T-cell (primary cell): ENCODE measurements at regions of chr21 and their contacts with region 1.

Region 1: DNA sequence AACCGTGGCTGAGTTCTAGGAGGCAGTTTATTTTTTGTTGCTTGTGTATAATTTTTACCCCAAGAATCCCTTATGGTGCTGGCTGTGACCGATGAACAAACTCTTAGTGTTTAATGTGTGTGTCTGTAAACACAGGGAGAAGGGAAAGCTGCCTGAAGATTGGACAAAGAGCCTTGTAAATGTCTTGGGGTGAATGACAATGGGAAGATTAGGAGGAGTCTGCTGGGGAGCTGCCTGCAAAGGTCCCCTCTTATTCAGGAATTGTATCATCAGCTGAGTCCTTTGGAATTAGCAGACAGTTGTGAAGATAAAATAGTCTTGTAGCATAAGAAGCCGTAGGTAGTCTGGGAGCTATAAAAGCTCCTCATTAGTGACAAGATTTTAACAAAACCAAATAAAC is 88.4 kb downstream of the RUNX1 start:
- DNase-seq: no peak
- ATAC-seq: no peak
- H3K4me3 ChIP-seq: no peak overlapping the region
- H3K4me3 Mint-ChIP-seq: no peak overlapping the region
- H3K27ac ChIP-seq: no peak overlapping the region
- H3K27ac Mint-ChIP-seq: no peak overlapping the region
- H3K4me1 ChIP-seq: peaks cover 30 to 56% of the 10 kb centered on the region in 2 experiments
- H3K4me1 Mint-ChIP-seq: peaks cover 80 to 88% (median 87%) of the 10 kb centered on the region in 3 donors
- H3K27me3 ChIP-seq: no peaks in the 10 kb centered on the region
- H3K27me3 Mint-ChIP-seq: no peaks in the 10 kb centered on the region

Region 2: GRCh38 chr21:34946916-34947534 is 13.6 kb before region 1 on chr21:
- CTCF ChIA-PET with region 1: no interaction called
- POLR2A ChIA-PET with region 1: no interaction called
- DNase-seq: no peak
- ATAC-seq: peak in 2 of 4 experiments; percentile 8 to 24
- H3K4me3 ChIP-seq: no peak overlapping the region
- H3K4me3 Mint-ChIP-seq: no peak overlapping the region
- H3K27ac ChIP-seq: no peak overlapping the region
- H3K27ac Mint-ChIP-seq: peak overlapping the region; percentile 81 to 82
- H3K4me1 ChIP-seq: peaks cover 40 to 44% of the 10 kb centered on the region in 2 experiments
- H3K4me1 Mint-ChIP-seq: peaks cover 84 to 92% (median 87%) of the 10 kb centered on the region in 3 donors
- H3K27me3 ChIP-seq: no peaks in the 10 kb centered on the region
- H3K27me3 Mint-ChIP-seq: no peaks in the 10 kb centered on the region

Region 3: DNA sequence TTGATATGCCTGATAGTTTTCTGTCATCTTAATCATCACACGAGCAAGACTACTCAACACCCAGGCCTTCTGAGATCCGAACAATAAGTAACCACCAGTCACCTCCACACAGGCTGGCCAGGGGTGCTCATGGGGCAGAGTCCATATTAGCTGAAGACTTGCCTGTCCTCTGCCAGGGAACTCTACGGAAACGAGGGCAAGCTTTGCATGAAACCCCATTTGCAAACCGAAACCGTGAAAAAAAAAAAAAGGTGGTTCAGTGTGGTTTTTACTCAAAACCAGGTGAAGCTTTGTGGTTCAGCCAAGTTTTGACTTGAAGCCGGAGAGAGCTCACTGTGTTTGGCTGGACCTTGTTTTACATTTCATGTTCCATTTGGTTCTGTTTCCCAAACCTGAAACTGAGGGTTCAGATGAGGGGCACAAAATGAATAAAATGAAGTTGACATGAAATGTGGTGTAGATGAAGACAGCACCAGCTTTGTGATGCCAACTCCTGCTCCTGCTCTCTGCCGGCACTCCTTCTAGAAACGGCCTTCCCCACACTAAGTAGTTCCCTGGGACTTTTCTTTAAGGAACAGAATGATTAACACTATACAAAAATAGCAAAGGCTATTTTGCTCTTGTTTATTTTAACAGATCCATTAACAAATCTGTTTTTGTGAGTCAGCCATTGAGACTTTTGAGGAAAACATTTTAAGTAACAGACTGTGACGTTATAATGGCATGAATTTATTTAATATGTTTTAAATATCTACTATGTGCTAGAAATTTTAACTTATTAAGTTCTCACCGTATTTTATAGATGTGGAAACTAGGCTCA is 13.7 kb after region 1 on chr21:
- CTCF ChIA-PET with region 1: no interaction called
- POLR2A ChIA-PET with region 1: interaction called, 5 to 10 read pairs
- DNase-seq: peak in 33 of 35 experiments; percentile 10 to 82 (median 32)
- ATAC-seq: peak; percentile 85 to 90 (median 88)
- H3K4me3 ChIP-seq: peak overlapping the region; percentile 24 to 61
- H3K4me3 Mint-ChIP-seq: peak overlapping the region; percentile 74 to 81 (median 78)
- H3K27ac ChIP-seq: peak overlapping the region; percentile 58
- H3K27ac Mint-ChIP-seq: peak overlapping the region; percentile 89 to 90
- H3K4me1 ChIP-seq: peaks cover 44 to 61% of the 10 kb centered on the region in 2 experiments
- H3K4me1 Mint-ChIP-seq: peaks cover 82 to 88% (median 86%) of the 10 kb centered on the region in 3 donors
- H3K27me3 ChIP-seq: no peaks in the 10 kb centered on the region
- H3K27me3 Mint-ChIP-seq: no peaks in the 10 kb centered on the region

Region 4: GRCh38 chr21:34984356-34985058 is 23.8 kb after region 1 on chr21:
- CTCF ChIA-PET with region 1: no interaction called
- POLR2A ChIA-PET with region 1: no interaction called
- DNase-seq: no peak
- ATAC-seq: no peak
- H3K4me3 ChIP-seq: no peak overlapping the region
- H3K4me3 Mint-ChIP-seq: peak overlapping the region; percentile 3 to 66 (median 56)
- H3K27ac ChIP-seq: peak overlapping the region; percentile 57
- H3K27ac Mint-ChIP-seq: peak overlapping the region; percentile 71 to 79
- H3K4me1 ChIP-seq: peaks cover 61 to 78% of the 10 kb centered on the region in 2 experiments
- H3K4me1 Mint-ChIP-seq: peaks cover 81 to 96% (median 94%) of the 10 kb centered on the region in 3 donors
- H3K27me3 ChIP-seq: no peaks in the 10 kb centered on the region
- H3K27me3 Mint-ChIP-seq: no peaks in the 10 kb centered on the region

Region 5: GRCh38 chr21:35035581-35035980 is 74.9 kb after region 1 on chr21:
- CTCF ChIA-PET with region 1: no interaction called
- POLR2A ChIA-PET with region 1: no interaction called
- DNase-seq: no peak
- ATAC-seq: no peak
- H3K4me3 ChIP-seq: no peak overlapping the region
- H3K4me3 Mint-ChIP-seq: peak overlapping the region in 2 of 3 donors; percentile 4 to 85
- H3K27ac ChIP-seq: peak overlapping the region; percentile 66
- H3K27ac Mint-ChIP-seq: peak overlapping the region; percentile 85 to 86
- H3K4me1 ChIP-seq: peaks cover 68 to 81% of the 10 kb centered on the region in 2 experiments
- H3K4me1 Mint-ChIP-seq: peaks cover 96 to 99% (median 97%) of the 10 kb centered on the region in 3 donors
- H3K27me3 ChIP-seq: no peaks in the 10 kb centered on the region
- H3K27me3 Mint-ChIP-seq: no peaks in the 10 kb centered on the region